Panc1 (cell line): ENCODE measurements at regions of chr15 and their contacts with region 1.

Region 1: GRCh38 chr15:64209680-64210334 is 47.0 kb upstream of the PPIB start:
- DNase-seq: peak; percentile 20
- ATAC-seq: 0 out of 2 replicates have a peak, but pooled peaks have one; percentile 34
- H3K4me3 ChIP-seq: no peak overlapping the region
- H3K27ac ChIP-seq: no peak overlapping the region
- H3K4me1 ChIP-seq: no peaks in the 10 kb centered on the region
- H3K27me3 ChIP-seq: no peaks in the 10 kb centered on the region
- CTCF ChIP-seq: peak; percentile 62; the same call in 1 of the 2 replicates

Region 2: DNA sequence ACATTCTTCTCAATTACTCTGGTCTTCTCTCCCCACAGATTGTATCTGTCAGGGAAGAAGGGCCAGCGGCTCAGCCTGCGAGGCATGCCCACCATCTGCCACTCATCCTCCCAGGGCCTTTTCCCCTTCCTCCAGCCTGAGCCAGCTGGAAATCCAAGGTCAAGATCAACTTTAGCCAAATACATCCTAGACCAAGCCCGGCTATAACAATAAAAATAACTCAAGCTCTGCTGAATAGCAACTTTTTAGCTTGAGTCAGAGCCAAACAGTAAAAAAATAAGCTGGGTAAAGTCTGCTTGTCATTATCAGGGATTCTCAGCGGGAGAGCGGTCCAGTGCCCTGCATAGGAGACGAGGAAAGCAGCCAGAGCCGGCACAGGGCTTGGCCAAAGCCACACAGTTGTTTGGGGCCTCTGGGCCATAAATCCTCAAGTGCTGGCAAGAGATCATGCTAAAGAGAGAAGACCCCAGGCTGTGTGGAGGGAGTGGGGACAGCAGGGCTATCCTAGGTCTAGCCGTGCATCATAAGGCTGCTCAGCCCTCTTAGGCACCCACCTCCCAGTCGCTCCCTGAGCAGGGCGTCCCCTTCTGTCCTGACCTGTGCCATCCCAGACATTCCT is 299.9 kb before region 1 on chr15:
- CTCF ChIA-PET with region 1: no interaction called
- POLR2A ChIA-PET with region 1: no interaction called
- in situ Hi-C with region 1: no loop called
- intact Hi-C with region 1: no loop called
- DNase-seq: no peak
- ATAC-seq: peak; percentile 43; the same call in 1 of the 2 replicates
- H3K4me3 ChIP-seq: no peak overlapping the region
- H3K27ac ChIP-seq: no peak overlapping the region
- H3K4me1 ChIP-seq: no peaks in the 10 kb centered on the region; the same call in 1 of the 2 replicates
- H3K27me3 ChIP-seq: no peaks in the 10 kb centered on the region
- CTCF ChIP-seq: no peak

Region 3: GRCh38 chr15:64185146-64185911 is 24.5 kb before region 1 on chr15:
- CTCF ChIA-PET with region 1: no interaction called
- POLR2A ChIA-PET with region 1: no interaction called
- in situ Hi-C with region 1: no loop called
- intact Hi-C with region 1: no loop called
- DNase-seq: no peak
- ATAC-seq: no peak
- H3K4me3 ChIP-seq: no peak overlapping the region
- H3K27ac ChIP-seq: no peak overlapping the region
- H3K4me1 ChIP-seq: no peaks in the 10 kb centered on the region
- H3K27me3 ChIP-seq: no peaks in the 10 kb centered on the region
- CTCF ChIP-seq: no peak

Region 4: GRCh38 chr15:64197425-64197824 is 12.4 kb before region 1 on chr15:
- CTCF ChIA-PET with region 1: no interaction called
- POLR2A ChIA-PET with region 1: interaction called, 20 read pairs
- in situ Hi-C with region 1: no loop called
- intact Hi-C with region 1: no loop called
- DNase-seq: no peak
- ATAC-seq: no peak
- H3K4me3 ChIP-seq: no peak overlapping the region
- H3K27ac ChIP-seq: no peak overlapping the region
- H3K4me1 ChIP-seq: no peaks in the 10 kb centered on the region
- H3K27me3 ChIP-seq: no peaks in the 10 kb centered on the region
- CTCF ChIP-seq: no peak

Region 5: DNA sequence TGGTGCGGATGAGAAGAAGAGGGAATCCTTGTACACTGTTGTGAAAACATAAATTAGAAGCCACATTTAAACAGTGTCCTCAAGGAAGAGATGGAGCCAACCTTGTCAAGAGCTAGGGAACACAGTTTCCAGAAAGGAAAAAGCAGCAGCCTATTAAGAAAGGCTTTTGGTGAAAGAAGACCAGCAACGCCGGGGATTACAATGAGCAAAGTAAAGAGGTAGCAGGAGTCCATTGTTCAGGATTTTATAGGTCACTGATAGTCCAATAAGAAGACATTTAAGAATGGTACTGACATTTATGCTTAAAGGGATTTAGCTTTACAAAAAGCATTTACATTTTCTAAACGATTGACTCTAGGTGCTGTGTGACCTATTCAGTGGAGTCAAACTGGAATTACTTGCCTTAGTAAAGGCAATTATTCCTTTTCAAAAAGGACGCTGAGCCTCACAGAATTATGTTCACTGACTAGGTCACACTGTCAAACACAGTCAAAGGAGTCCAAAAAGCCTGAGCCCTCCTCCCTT is 105.4 kb after region 1 on chr15:
- CTCF ChIA-PET with region 1: no interaction called
- POLR2A ChIA-PET with region 1: no interaction called
- in situ Hi-C with region 1: no loop called
- intact Hi-C with region 1: no loop called
- DNase-seq: no peak
- ATAC-seq: no peak
- H3K4me3 ChIP-seq: no peak overlapping the region
- H3K27ac ChIP-seq: no peak overlapping the region
- H3K4me1 ChIP-seq: no peaks in the 10 kb centered on the region
- H3K27me3 ChIP-seq: no peaks in the 10 kb centered on the region
- CTCF ChIP-seq: no peak

Region 6: GRCh38 chr15:64333516-64333915 is 123.7 kb after region 1 on chr15:
- CTCF ChIA-PET with region 1: no interaction called
- POLR2A ChIA-PET with region 1: interaction called, 19 read pairs
- in situ Hi-C with region 1: no loop called
- intact Hi-C with region 1: no loop called
- DNase-seq: no peak
- ATAC-seq: no peak
- H3K4me3 ChIP-seq: no peak overlapping the region
- H3K27ac ChIP-seq: no peak overlapping the region
- H3K4me1 ChIP-seq: no peaks in the 10 kb centered on the region
- H3K27me3 ChIP-seq: no peaks in the 10 kb centered on the region
- CTCF ChIP-seq: no peak

Region 7: GRCh38 chr15:64355944-64356709 is 146.3 kb after region 1 on chr15 and contains the start of gene CSNK1G1:
- CTCF ChIA-PET with region 1: interaction called, 3 read pairs
- POLR2A ChIA-PET with region 1: interaction called, 7 read pairs
- in situ Hi-C with region 1: no loop called
- intact Hi-C with region 1: loop called (anchors 5 kb)
- DNase-seq: peak; percentile 92
- ATAC-seq: peak; percentile 99
- H3K4me3 ChIP-seq: peak within 1 kb of the TSS; percentile 73 to 97
- H3K27ac ChIP-seq: peak within 1 kb of the TSS; percentile 92
- H3K4me1 ChIP-seq: peaks cover 9% of the 10 kb centered on the region
- H3K27me3 ChIP-seq: no peaks in the 10 kb centered on the region
- CTCF ChIP-seq: no peak
- total RNA-seq, gene CSNK1G1: 22.8 TPM

Region 8: GRCh38 chr15:64430000-64430735 is 220.4 kb after region 1 on chr15:
- CTCF ChIA-PET with region 1: no interaction called
- POLR2A ChIA-PET with region 1: interaction called, 17 read pairs
- in situ Hi-C with region 1: no loop called
- intact Hi-C with region 1: no loop called
- DNase-seq: no peak
- ATAC-seq: no peak
- H3K4me3 ChIP-seq: no peak overlapping the region
- H3K27ac ChIP-seq: no peak overlapping the region
- H3K4me1 ChIP-seq: no peaks in the 10 kb centered on the region
- H3K27me3 ChIP-seq: no peaks in the 10 kb centered on the region
- CTCF ChIP-seq: no peak

Region 9: DNA sequence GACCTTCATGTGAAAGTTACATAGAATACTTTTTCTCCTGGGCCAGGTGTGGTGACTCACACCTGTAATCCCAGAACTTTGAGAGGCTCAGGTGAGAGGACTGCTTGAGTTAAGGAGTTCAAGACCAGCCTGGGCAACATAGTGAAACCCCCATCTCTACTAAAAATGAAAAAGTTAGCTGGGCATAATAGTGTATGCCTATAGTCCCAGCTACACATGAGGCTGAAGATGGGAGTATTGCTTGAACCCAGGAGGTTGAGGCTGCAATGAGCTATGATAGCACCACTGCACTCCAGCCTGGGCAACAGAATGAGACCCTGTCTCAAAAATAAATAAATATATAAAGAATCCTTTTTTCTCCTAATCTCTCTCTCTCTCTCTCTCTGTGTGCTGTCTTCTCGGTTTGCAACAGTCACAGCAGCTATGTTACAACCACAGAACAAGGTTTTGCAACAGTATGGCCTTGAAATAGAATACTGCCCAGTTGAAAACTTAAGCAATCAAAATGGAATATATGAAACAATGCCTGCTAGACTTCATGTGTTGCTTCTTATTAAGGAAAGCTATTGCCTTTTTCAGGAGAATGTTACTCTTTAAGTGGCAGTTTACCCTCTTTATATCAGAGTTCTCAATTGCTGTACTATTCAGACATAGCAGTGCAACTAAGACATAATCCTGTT is 1594.6 kb after region 1 on chr15:
- CTCF ChIA-PET with region 1: no interaction called
- POLR2A ChIA-PET with region 1: no interaction called
- in situ Hi-C with region 1: no loop called
- intact Hi-C with region 1: no loop called
- DNase-seq: no peak
- ATAC-seq: no peak
- H3K4me3 ChIP-seq: no peak overlapping the region
- H3K27ac ChIP-seq: no peak overlapping the region
- H3K4me1 ChIP-seq: no peaks in the 10 kb centered on the region
- H3K27me3 ChIP-seq: no peaks in the 10 kb centered on the region
- CTCF ChIP-seq: no peak